ENCODE measurements at regions of chr1 and their contacts with region 1.

Region 1: GRCh38 chr1:165768513-165769394 is at the start of gene TMCO1:
- DNase-seq: peak; percentile 93 to 98 (median 97)
- H3K4me3 ChIP-seq: peak within 1 kb of the TSS; percentile 68 to 69
- H3K4me3 Mint-ChIP-seq: peak within 1 kb of the TSS; percentile 94 to 99 (median 98)
- H3K27ac ChIP-seq: peak within 1 kb of the TSS; percentile 88
- H3K27ac Mint-ChIP-seq: peak within 1 kb of the TSS; percentile 96 to 100 (median 98)
- H3K4me1 ChIP-seq: peaks cover 60% of the 10 kb centered on the region
- H3K4me1 Mint-ChIP-seq: peaks cover 44 to 72% (median 59%) of the 10 kb centered on the region in 4 donors
- H3K27me3 ChIP-seq: no peaks in the 10 kb centered on the region
- H3K27me3 Mint-ChIP-seq: no peaks in the 10 kb centered on the region
- total RNA-seq, gene TMCO1: 63.7 to 67.3 TPM

Region 2: GRCh38 chr1:165630629-165631341 is 138.0 kb before region 1 on chr1 and contains the start of gene MGST3:
- CTCF ChIA-PET with region 1: interaction called, 3 read pairs
- POLR2A ChIA-PET with region 1: interaction called, 30 read pairs
- intact Hi-C with region 1: loop called (anchors 1 kb)
- DNase-seq: peak; percentile 93 to 97 (median 94)
- H3K4me3 ChIP-seq: peak within 1 kb of the TSS; percentile 86 to 97
- H3K4me3 Mint-ChIP-seq: no peak within 1 kb of the TSS
- H3K27ac ChIP-seq: peak within 1 kb of the TSS; percentile 69
- H3K27ac Mint-ChIP-seq: peak within 1 kb of the TSS in 1 of 7 donors; percentile 85
- H3K4me1 ChIP-seq: peaks cover 35% of the 10 kb centered on the region
- H3K4me1 Mint-ChIP-seq: peaks cover 15 to 22% (median 18%) of the 10 kb centered on the region in 4 donors
- H3K27me3 ChIP-seq: no peaks in the 10 kb centered on the region
- H3K27me3 Mint-ChIP-seq: no peaks in the 10 kb centered on the region
- total RNA-seq, gene MGST3: 67.6 to 74.0 TPM

Region 3: DNA sequence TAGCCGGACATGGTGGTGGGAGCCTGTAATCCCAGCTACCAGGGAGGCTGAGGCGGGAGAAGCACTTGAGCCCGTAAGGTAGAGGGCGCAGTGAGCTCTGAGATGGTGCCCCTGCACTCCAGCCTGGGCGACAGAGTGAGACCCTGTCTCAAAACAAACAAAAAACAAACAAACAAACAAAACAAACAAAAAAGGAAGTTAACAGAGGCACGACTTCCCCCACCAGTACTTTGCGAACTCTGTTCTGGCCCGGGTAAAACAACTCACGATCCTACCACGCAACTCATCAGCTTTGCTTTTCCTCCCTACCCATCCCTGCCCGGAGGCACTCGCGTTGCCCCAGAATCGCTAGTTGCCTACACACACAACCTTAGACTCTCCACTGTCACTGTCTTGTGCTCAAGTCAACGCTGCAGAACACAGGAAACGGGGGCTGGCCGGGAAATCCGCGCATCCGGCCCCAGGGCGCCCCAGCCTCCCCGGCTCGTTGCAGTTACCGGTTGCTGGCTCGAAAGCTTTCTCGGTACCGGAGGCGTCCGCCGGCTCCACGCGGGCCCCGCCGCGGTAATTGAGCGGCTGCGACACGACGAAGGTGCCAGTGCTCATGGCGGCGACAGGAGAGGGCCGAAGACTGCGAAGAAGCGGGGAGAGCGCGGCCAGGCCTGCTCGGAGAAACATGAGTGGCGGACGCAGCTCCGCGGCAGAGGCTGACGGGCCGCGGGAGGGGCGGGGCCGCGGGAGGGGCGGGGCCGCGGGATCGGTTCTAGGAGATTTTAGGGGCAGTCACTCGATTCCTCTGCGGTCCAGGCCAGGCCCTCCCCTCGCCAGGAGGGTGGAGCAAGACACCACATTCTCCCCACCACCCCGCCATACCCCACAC is 70.6 kb before region 1 on chr1 and contains the start of gene ALDH9A1:
- CTCF ChIA-PET with region 1: interaction called, 16 read pairs
- POLR2A ChIA-PET with region 1: interaction called, 60 read pairs
- intact Hi-C with region 1: loop called (anchors 1 kb)
- DNase-seq: peak; percentile 86 to 91 (median 87)
- H3K4me3 ChIP-seq: peak within 1 kb of the TSS; percentile 95 to 97
- H3K4me3 Mint-ChIP-seq: peak within 1 kb of the TSS; percentile 92 to 100 (median 98)
- H3K27ac ChIP-seq: peak within 1 kb of the TSS; percentile 79
- H3K27ac Mint-ChIP-seq: peak within 1 kb of the TSS; percentile 91 to 99 (median 97)
- H3K4me1 ChIP-seq: peaks cover 21% of the 10 kb centered on the region
- H3K4me1 Mint-ChIP-seq: peaks cover 15 to 39% (median 27%) of the 10 kb centered on the region in 4 donors
- H3K27me3 ChIP-seq: no peaks in the 10 kb centered on the region
- H3K27me3 Mint-ChIP-seq: no peaks in the 10 kb centered on the region
- total RNA-seq, gene ALDH9A1: 45.2 to 47.1 TPM

Region 4: GRCh38 chr1:165793951-165794350 is 25.2 kb after region 1 on chr1:
- CTCF ChIA-PET with region 1: no interaction called
- POLR2A ChIA-PET with region 1: no interaction called
- intact Hi-C with region 1: no loop called
- DNase-seq: no peak
- H3K4me3 ChIP-seq: no peak overlapping the region
- H3K4me3 Mint-ChIP-seq: no peak overlapping the region
- H3K27ac ChIP-seq: no peak overlapping the region
- H3K27ac Mint-ChIP-seq: no peak overlapping the region
- H3K4me1 ChIP-seq: no peaks in the 10 kb centered on the region
- H3K4me1 Mint-ChIP-seq: no peaks in the 10 kb centered on the region
- H3K27me3 ChIP-seq: no peaks in the 10 kb centered on the region
- H3K27me3 Mint-ChIP-seq: peaks cover 6 to 13% of the 10 kb centered on the region in 2 donors

Region 5: DNA sequence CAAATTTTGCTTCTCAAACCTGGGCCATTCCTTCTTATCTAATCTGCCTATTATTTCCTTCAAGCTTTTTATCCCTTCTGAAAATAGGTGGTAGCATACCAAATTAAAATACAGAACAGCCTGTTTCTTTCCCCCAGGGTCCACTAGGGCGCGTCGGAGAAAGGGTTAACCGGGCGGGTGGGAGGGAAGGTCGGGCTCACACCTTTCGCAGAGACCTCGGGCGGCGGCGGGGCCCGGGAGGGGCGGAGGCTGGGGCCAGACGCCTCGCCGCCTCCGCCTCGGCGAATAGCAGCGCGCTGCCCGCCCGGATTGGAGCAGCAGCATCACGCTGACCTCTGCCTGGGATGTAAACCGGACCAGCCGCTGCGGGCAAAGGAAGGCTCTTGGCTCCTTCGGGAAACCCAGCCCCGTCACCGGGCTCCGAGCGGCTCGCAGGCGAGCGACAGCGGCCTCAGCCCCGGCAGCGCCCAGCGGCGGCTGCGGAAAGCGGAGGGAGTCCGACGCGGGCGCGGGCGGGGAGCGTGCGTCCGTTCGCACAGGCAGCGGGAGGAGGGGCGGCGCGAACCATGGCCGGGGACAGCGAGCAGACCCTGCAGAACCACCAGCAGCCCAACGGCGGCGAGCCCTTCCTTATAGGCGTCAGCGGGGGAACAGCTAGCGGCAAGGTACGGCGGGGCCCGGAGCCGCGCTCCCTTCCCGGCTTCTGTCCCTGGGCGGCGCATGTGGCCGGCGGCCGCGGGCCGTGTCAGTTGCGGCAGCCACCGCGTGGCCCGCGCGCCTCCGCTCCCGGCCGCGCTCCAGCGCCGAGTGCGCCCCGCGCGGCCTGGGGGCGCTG is 58.7 kb after region 1 on chr1 and contains the start of gene UCK2:
- CTCF ChIA-PET with region 1: interaction called, 5 read pairs
- POLR2A ChIA-PET with region 1: interaction called, 11 read pairs
- intact Hi-C with region 1: loop called (anchors 1 kb)
- DNase-seq: peak; percentile 37 to 50 (median 43)
- H3K4me3 ChIP-seq: peak within 1 kb of the TSS; percentile 73 to 81
- H3K4me3 Mint-ChIP-seq: peak within 1 kb of the TSS; percentile 91 to 96 (median 93)
- H3K27ac ChIP-seq: peak within 1 kb of the TSS; percentile 45
- H3K27ac Mint-ChIP-seq: peak within 1 kb of the TSS; percentile 16 to 91 (median 83)
- H3K4me1 ChIP-seq: peaks cover 12% of the 10 kb centered on the region
- H3K4me1 Mint-ChIP-seq: peaks cover 11 to 24% (median 18%) of the 10 kb centered on the region in 4 donors
- H3K27me3 ChIP-seq: no peaks in the 10 kb centered on the region
- H3K27me3 Mint-ChIP-seq: no peaks in the 10 kb centered on the region
- total RNA-seq, gene UCK2: 2.1 to 2.7 TPM

Region 6: DNA sequence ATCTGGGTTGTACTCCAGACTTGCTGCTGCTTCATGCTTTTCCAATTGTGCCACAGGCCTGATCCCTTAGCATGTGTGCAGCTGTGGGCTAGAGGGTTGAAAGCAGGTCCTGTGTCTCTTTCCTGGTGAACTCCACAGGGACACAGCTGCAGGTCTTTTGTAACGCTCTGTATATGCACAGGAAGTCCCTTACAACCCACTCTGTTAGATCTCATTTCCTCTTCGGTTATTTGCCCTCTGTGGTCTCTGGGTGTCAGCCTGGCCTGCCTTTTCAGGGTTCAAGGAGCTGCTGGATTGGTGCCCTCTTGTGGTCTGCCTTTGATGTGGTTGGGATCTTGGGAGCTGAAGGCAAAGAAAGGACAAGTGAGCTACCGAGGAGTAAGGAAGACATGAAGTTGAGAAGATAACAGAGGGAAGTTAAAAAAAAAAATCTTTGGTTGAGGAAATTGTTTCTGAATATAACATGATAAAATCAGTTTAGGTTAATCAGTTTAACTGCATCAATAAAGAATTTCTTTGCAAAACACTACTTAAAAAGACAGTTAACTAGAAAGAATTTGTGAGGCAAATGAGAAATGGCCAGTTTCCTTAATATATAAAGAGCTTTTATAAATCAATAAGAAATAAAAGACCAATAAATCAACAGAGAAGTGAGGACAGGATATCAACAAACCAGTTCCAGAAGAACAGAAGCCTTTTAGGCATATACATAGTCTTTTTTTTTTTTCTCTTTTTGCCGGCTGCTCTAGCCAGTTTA is 102.7 kb after region 1 on chr1:
- CTCF ChIA-PET with region 1: no interaction called
- POLR2A ChIA-PET with region 1: interaction called, 10 read pairs
- intact Hi-C with region 1: loop called (anchors 1 kb)
- DNase-seq: peak; percentile 41 to 59 (median 56)
- H3K4me3 ChIP-seq: no peak overlapping the region
- H3K4me3 Mint-ChIP-seq: peak overlapping the region in 7 of 8 donors; percentile 47 to 84 (median 72)
- H3K27ac ChIP-seq: no peak overlapping the region
- H3K27ac Mint-ChIP-seq: peak overlapping the region; percentile 19 to 77 (median 64)
- H3K4me1 ChIP-seq: peaks cover 37% of the 10 kb centered on the region
- H3K4me1 Mint-ChIP-seq: peaks cover 21 to 45% (median 34%) of the 10 kb centered on the region in 4 donors
- H3K27me3 ChIP-seq: no peaks in the 10 kb centered on the region
- H3K27me3 Mint-ChIP-seq: no peaks in the 10 kb centered on the region

Region 7: GRCh38 chr1:166133276-166133841 is 364.6 kb after region 1 on chr1:
- CTCF ChIA-PET with region 1: no interaction called
- POLR2A ChIA-PET with region 1: no interaction called
- intact Hi-C with region 1: no loop called
- DNase-seq: no peak
- H3K4me3 ChIP-seq: no peak overlapping the region
- H3K4me3 Mint-ChIP-seq: no peak overlapping the region
- H3K27ac ChIP-seq: no peak overlapping the region
- H3K27ac Mint-ChIP-seq: no peak overlapping the region
- H3K4me1 ChIP-seq: no peaks in the 10 kb centered on the region
- H3K4me1 Mint-ChIP-seq: peaks cover 0 to 1% (median 0%) of the 10 kb centered on the region in 4 donors
- H3K27me3 ChIP-seq: no peaks in the 10 kb centered on the region
- H3K27me3 Mint-ChIP-seq: peaks cover 3 to 4% of the 10 kb centered on the region in 2 donors

Region 8: GRCh38 chr1:167128261-167129227 is 1359.8 kb after region 1 on chr1:
- CTCF ChIA-PET with region 1: no interaction called
- POLR2A ChIA-PET with region 1: no interaction called
- intact Hi-C with region 1: no loop called
- DNase-seq: peak in 2 of 5 donors; percentile 8 to 16
- H3K4me3 ChIP-seq: no peak overlapping the region
- H3K4me3 Mint-ChIP-seq: no peak overlapping the region
- H3K27ac ChIP-seq: no peak overlapping the region
- H3K27ac Mint-ChIP-seq: peak overlapping the region in 1 of 7 donors; percentile 72
- H3K4me1 ChIP-seq: no peaks in the 10 kb centered on the region
- H3K4me1 Mint-ChIP-seq: no peaks in the 10 kb centered on the region
- H3K27me3 ChIP-seq: no peaks in the 10 kb centered on the region
- H3K27me3 Mint-ChIP-seq: peaks cover 16 to 35% of the 10 kb centered on the region in 2 donors

Measured in CD4-positive, alpha-beta memory T cell (primary cell).